ENCODE measurements at regions of chr3 and their contacts with region 1.

Region 1: DNA sequence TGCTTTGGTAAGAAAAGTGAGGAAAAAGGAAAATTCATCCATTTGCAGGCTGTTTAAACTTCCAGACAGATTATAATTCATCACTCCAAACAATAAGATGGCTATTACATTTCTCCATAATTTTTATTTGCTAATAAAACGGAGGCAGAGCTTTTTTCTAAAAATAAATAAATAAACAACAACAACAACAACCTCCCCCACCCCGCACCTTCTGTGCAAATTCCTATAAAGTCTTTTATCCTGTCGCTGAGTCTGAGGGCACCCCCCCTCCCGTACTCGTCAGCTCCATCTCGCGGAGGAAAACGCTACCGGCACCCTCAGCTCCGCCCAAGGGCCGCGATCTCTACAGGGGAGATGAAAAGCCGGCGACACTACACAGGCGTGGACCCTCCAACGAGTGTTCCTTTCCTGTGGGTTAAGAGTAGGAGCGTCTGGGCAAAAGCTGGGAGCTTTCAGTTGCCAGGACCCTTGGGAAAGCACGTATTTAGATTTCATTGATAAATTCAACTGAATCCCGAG is 1.0 kb upstream of the ATP1B3 start:
- DNase-seq: peak; percentile 95
- H3K4me3 Mint-ChIP-seq: peak overlapping the region; percentile 99
- H3K27ac Mint-ChIP-seq: peak overlapping the region; percentile 81
- H3K4me1 Mint-ChIP-seq: peaks cover 36% of the 10 kb centered on the region
- H3K27me3 Mint-ChIP-seq: no peaks in the 10 kb centered on the region
- CTCF ChIP-seq: peak; percentile 94

Region 2: DNA sequence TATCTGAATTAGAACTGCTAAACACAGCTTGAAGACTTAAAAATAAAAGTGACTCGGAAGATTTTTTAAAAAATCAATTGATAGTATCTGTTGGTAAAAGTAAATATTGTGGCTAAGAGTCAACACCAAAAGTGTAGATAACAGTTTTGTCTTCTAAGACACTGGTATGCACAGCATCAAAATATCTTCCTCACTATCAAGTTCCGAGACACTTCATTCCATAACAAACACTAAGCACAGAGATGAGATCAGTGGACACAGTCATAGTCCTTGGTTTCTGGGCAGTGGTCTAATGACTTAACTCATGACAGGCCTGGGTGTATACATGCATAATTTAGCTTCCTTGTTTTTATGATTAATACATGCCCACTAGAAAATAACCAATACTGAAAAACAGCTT is 580.6 kb before region 1 on chr3:
- CTCF ChIA-PET with region 1: no interaction called
- intact Hi-C with region 1: loop called (anchors 10 kb)
- DNase-seq: no peak
- H3K4me3 Mint-ChIP-seq: peak overlapping the region; percentile 53
- H3K27ac Mint-ChIP-seq: peak overlapping the region; percentile 37
- H3K4me1 Mint-ChIP-seq: peaks cover 11% of the 10 kb centered on the region
- H3K27me3 Mint-ChIP-seq: no peaks in the 10 kb centered on the region
- CTCF ChIP-seq: no peak

Region 3: GRCh38 chr3:141575879-141576743 is 299.3 kb before region 1 on chr3:
- CTCF ChIA-PET with region 1: no interaction called
- intact Hi-C with region 1: loop called (anchors 2 kb)
- DNase-seq: no peak
- H3K4me3 Mint-ChIP-seq: no peak overlapping the region
- H3K27ac Mint-ChIP-seq: no peak overlapping the region
- H3K4me1 Mint-ChIP-seq: no peaks in the 10 kb centered on the region
- H3K27me3 Mint-ChIP-seq: no peaks in the 10 kb centered on the region
- CTCF ChIP-seq: peak; percentile 39

Measured in Calu3 (cell line).